ENCODE measurements at regions of chr2 and their contacts with region 1.

Region 1: DNA sequence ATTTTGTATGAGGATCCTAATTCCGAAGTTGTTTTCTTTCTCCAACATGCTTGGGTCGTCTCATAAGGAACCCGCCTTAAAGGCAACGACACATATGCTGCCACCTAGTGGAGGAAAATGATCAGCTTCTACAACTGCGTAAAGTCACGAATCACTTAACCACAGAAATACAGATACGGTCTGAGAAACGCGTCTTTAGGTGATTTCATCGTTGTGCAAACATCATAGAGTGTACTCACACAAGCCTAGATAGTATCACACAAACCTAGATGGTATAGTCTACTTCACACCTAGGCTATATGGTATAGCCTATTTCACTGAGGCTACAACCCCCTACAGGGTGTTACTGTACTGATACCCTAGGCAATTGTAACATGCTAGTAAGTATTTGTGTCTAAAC is 13.1 kb downstream of the GNLY start:
- DNase-seq: peak; percentile 71
- H3K4me3 Mint-ChIP-seq: no peak overlapping the region
- H3K27ac Mint-ChIP-seq: peak overlapping the region; percentile 71
- H3K4me1 Mint-ChIP-seq: peaks cover 52% of the 10 kb centered on the region
- H3K27me3 Mint-ChIP-seq: peaks cover 23% of the 10 kb centered on the region

Region 2: GRCh38 chr2:85635636-85636035 is 71.7 kb before region 1 on chr2:
- intact Hi-C with region 1: loop called (anchors 2 kb)
- DNase-seq: no peak
- H3K4me3 Mint-ChIP-seq: no peak overlapping the region
- H3K27ac Mint-ChIP-seq: no peak overlapping the region
- H3K4me1 Mint-ChIP-seq: peaks cover 7% of the 10 kb centered on the region
- H3K27me3 Mint-ChIP-seq: no peaks in the 10 kb centered on the region

Region 3: DNA sequence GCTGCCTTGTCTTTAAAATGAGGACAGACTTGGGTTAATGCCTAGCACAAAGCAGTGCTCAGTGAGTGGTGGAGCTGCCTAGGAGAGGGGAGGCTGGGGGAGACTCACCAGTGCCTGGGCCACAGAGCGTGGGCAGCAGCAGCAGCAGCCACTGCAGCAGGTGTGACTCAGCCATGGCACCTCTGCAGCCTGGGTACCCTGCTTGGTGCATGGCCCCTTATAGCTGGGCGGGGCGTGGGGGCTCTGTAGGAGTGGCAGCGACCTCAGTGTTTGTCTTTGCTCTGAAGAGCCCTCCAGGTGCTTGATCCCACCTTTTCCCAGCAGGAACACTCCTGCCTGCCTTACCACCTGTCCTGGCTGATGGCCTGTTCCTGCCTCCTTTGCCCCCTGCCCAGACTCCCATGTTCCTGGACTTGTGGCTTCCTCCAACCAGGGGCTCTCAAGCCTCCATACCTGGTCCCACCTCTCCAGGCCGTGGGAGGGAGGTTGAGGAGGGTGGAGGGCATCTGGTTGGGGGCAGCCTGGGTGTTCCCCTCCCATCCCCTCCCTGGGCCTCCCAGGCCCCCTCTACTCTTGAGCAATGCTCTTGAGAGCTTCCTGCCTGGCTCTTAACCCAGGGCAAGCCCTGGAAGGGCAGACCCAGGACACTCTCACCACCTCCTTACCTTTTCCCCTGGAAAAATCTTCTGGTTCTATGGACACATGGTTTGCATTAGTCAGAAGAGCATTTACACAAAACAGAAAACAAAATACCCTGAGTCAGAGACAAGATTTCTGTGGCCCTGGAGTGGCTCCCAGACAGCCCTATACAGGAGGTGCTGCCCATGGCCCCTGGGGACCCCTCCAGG is 39.1 kb before region 1 on chr2 and contains the start of gene SFTPB:
- intact Hi-C with region 1: no loop called
- DNase-seq: no peak
- H3K4me3 Mint-ChIP-seq: no peak within 1 kb of the TSS
- H3K27ac Mint-ChIP-seq: no peak within 1 kb of the TSS
- H3K4me1 Mint-ChIP-seq: no peaks in the 10 kb centered on the region
- H3K27me3 Mint-ChIP-seq: peaks cover 4% of the 10 kb centered on the region
- total RNA-seq, gene SFTPB: not detected in 2 replicates

Region 4: DNA sequence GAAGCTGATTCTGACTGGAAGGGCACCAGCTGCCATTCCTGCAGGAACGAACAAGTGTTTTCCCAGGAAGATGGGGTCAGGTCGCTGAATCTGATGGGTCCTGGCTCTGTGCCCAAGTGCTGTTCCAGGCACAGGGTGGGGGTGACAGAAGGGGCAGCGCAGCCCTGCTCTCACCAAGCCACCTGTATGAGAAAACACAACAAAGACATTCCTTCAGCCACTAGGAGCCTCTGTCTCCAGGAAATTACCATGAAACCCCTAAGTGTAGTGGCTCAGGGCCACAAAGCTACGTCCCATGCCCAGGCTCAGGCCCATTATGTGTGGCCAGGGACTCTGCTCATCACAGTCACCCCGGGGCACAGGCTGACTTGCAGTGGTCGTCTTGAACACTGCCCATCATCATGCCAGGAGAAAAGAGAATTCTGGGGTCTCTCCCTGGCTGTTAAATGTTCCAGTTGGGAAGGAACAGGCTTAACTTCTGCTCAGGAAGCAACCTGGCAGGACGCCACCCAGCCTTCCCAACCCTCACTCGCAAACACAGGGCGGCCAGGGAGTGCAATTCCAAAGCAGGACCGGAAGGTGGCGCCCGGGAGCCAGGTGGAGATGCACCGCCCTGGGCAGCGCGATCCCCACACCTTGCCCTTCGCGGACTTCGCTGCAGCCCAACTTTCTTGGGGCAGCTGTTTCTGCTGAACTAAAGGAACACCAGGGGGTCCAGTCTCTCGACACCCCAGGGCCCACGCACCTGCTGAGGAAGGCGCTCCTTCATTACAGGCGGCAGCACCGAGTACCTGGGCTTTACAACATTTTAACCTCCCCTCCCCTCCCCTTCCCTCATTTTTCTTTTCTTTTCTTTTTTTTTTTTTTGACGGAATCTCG is 28.3 kb before region 1 on chr2:
- intact Hi-C with region 1: loop called (anchors 1 kb)
- DNase-seq: peak; percentile 69
- H3K4me3 Mint-ChIP-seq: no peak overlapping the region
- H3K27ac Mint-ChIP-seq: no peak overlapping the region
- H3K4me1 Mint-ChIP-seq: peaks cover 26% of the 10 kb centered on the region
- H3K27me3 Mint-ChIP-seq: peaks cover 7% of the 10 kb centered on the region

Region 5: DNA sequence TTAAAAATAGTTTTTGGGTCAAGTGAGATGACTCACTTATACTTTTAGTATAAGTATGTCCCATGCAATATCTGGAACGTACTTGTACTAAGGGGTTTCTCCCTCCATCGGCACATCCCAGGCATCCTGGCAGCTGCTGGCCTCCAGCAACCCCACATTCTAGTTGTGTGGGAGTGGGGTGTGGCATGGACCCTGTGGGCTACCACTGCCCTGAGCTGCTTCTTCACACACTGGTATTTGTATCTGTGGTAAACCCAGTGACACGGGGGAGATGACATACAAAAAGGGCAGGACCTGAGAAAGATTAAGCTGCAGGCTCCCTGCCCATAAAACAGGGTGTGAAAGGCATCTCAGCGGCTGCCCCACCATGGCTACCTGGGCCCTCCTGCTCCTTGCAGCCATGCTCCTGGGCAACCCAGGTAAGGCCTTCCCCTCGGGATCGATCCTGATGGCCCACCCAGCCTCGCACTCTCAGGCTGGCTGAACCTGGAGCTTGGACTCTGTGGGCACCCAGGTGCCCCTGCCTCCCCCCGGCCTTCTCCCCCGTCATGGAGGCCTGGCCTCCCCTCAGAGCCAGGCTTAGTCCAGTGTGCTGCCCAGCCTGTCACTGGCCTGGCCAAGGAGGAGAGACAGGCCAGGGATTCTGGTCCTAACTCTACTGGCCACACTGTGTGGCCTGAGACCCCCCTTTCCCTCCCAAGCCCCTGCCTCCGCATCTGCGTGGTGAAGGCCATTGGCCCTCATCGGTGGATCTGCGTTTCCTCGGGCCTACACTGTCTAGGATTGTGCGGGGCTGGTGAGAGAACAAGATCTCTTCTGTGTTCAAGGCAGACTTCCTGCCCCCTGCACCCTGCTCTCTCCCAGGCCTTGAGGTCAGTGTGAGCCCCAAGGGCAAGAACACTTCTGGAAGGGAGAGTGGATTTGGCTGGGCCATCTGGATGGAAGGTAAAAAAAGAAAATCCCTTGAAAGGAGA is 13.0 kb before region 1 on chr2 and contains the start of gene GNLY:
- intact Hi-C with region 1: no loop called
- DNase-seq: no peak
- H3K4me3 Mint-ChIP-seq: no peak within 1 kb of the TSS
- H3K27ac Mint-ChIP-seq: peak within 1 kb of the TSS; percentile 33
- H3K4me1 Mint-ChIP-seq: peaks cover 20% of the 10 kb centered on the region
- H3K27me3 Mint-ChIP-seq: peaks cover 6% of the 10 kb centered on the region
- total RNA-seq, gene GNLY: 21.9 and 23.5 TPM in 2 replicates

Region 6: GRCh38 chr2:85753525-85754312 is 46.4 kb after region 1 on chr2 and contains the start of gene ATOH8:
- intact Hi-C with region 1: no loop called
- DNase-seq: peak; percentile 25
- H3K4me3 Mint-ChIP-seq: peak within 1 kb of the TSS; percentile 81
- H3K27ac Mint-ChIP-seq: no peak within 1 kb of the TSS
- H3K4me1 Mint-ChIP-seq: peaks cover 15% of the 10 kb centered on the region
- H3K27me3 Mint-ChIP-seq: peaks cover 66% of the 10 kb centered on the region
- total RNA-seq, gene ATOH8: 0.07 and 0.11 TPM in 2 replicates

Measured in activated T-helper 2 cell treated with anti-CD3 and anti-CD28 coated beads, Interferon-gamma antibody, Interleukin-2, Interleukin-4, amounts not matched to agents 10 μg/mL and 5 μg/mL and 100 μg/mL, durations not matched to agents 14 hours and 24 hours and 36 hours (primary cell).